ENCODE measurements at regions of chr5 and their contacts with region 1.

Region 1: DNA sequence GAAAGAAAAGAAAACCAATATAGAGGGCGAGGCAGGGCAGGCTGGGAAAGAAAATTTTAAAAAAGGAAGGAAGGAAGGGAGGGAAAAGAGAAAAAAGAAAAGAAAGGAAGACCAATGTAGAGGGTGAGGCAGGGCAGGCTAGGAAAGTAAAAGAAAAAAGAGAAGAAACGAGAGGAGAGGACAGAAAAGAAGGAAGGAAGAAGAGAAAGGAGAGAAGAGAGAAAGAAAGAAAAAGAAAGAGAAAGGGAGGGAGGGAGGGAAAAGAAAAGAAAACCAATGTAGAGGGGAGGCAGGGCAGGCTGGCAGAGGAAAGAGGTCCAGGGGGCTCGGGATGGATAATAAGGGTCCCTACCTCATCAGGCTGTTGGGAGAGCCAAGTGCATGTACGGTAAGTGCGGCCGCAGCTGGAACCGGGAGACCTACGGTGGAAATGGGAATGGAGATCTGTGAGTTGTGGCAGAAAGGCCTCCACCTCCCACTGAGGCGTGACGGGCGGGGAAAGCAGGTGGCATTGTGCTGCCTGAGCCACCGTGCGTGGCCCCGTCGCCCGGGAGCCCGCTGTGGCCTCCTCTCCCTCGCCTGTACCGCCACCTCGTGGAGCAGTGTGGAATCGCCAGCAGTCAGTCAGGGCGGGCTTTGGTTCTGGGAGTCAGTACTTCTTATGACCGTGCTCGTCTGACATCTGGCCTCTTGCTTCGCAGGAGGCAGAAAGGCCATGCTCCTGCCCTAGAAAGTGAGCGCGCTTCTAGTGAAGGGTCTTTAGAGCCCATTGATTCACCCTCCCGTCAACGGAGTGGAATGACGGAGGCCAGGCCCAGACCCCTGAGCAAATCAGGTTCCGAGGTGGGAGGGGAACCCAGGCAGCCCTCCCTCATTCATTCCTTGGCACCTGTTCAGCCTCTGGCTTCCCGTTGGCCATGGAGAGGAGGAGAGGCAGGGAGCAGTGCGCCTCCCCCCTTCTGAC is 10.4 kb upstream of the NHP2 start:
- DNase-seq: peak; percentile 95
- H3K4me3 ChIP-seq: peak overlapping the region; percentile 10 to 58; a peak in 3 of 4 replicates
- H3K27ac ChIP-seq: no peak overlapping the region
- H3K4me1 ChIP-seq: peaks cover 0 to 8% of the 10 kb centered on the region in 2 experiments; a peak in 1 of 4 replicates
- H3K27me3 ChIP-seq: no peaks in the 10 kb centered on the region
- CTCF ChIP-seq: peak; percentile 94
- EP300 ChIP-seq: no peak
- RAD21 ChIP-seq: peak; percentile 94

Region 2: DNA sequence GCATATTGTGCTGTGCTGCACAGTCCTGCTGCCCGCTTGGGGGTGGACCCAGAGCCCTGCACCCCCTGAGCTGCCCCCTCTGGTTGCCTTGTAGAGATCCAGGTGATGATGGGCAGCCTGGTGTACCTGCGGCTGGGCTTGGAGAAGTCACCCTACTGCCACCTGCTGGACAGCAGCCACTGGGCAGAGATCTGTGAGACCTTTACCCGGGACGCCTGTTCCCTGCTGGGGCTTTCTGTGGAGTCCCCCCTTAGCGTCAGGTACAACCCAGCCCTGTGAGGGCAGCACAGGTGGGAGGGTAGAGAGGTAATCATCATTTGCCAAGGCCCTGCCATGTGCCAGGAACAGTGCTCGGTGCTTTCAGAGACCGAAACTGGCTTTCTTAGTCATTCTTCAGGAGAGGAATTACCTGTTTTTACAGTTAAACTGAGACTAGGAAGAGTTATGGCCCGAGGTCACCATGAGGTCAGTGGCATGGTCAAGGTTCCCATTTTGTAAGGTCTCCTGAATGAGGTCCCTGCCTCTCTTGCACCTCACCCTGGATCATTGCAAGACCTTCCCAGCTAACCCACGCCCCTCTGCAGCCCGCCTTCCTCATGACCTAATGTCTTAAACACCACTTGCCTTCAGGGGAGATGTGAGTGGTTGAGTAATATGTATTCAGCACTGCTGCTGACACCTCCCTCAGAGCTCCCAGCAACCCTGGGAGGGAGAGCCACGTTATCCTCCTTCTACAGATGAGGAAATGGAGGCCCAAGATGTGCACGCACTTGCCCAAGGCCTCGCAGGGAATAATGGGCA is 17.8 kb before region 1 on chr5:
- CTCF ChIA-PET with region 1: interaction called, 13 read pairs
- POLR2A ChIA-PET with region 1: interaction called, 3 read pairs
- DNase-seq: peak; percentile 81
- H3K4me3 ChIP-seq: no peak overlapping the region
- H3K27ac ChIP-seq: no peak overlapping the region; a peak in 1 of 4 replicates
- H3K4me1 ChIP-seq: peaks cover 0 to 2% of the 10 kb centered on the region in 2 experiments; a peak in 1 of 4 replicates
- H3K27me3 ChIP-seq: no peaks in the 10 kb centered on the region
- CTCF ChIP-seq: peak; percentile 74
- EP300 ChIP-seq: no peak
- RAD21 ChIP-seq: peak; percentile 63

Region 3: GRCh38 chr5:178273665-178274541 is 109.8 kb after region 1 on chr5:
- CTCF ChIA-PET with region 1: no interaction called
- POLR2A ChIA-PET with region 1: no interaction called
- DNase-seq: no peak
- H3K4me3 ChIP-seq: no peak overlapping the region
- H3K27ac ChIP-seq: no peak overlapping the region; a peak in 1 of 4 replicates
- H3K4me1 ChIP-seq: peaks cover 0 to 6% of the 10 kb centered on the region in 2 experiments; a peak in 1 of 4 replicates
- H3K27me3 ChIP-seq: no peaks in the 10 kb centered on the region
- CTCF ChIP-seq: no peak
- EP300 ChIP-seq: no peak
- RAD21 ChIP-seq: no peak